GM18951 (cell line): ENCODE measurements at regions of chr22 and their contacts with region 1.

Region 1: GRCh38 chr22:29635734-29636357 is 32.4 kb downstream of the NF2 start:
- POLR2A ChIP-seq: no peak

Region 2: DNA sequence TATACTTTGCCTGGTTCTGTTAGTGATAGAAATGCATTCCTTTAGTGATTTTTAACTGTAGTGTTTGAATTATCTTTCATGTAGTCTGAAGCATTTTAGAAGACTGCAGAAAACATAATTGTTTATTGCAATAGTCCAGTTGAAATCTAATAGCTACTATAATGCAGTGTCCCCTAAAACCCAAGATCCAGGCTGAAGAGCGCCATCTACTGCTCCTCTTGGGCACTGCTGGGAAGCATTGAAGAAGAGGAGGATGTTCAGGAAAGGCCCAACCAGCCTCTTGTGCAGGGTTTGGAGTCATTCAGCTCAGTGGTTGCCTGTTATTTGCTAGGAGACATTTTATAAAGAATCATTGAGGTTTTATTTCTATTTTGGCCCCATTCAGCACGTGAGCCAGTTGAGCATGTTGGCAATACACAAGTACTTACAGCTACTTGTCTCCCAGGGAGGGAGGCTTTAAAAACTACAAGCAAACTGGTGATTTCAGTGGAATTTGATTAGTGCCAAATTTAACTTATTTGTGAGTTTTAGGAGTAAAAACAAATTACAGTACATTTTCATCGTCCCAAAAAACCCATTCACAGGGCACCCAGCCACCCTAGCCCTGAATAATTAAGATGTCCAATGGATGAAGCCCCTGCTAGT is 369.5 kb after region 1 on chr22:
- in situ Hi-C with region 1: loop called (anchors 10 kb)
- POLR2A ChIP-seq: no peak

Region 3: GRCh38 chr22:30079952-30080533 is 444.2 kb after region 1 on chr22 and contains the start of gene HORMAD2:
- in situ Hi-C with region 1: loop called (anchors 10 kb)
- POLR2A ChIP-seq: no peak